IMR-90 (cell line): ENCODE measurements at regions of chr1 and their contacts with region 1.

Region 1: DNA sequence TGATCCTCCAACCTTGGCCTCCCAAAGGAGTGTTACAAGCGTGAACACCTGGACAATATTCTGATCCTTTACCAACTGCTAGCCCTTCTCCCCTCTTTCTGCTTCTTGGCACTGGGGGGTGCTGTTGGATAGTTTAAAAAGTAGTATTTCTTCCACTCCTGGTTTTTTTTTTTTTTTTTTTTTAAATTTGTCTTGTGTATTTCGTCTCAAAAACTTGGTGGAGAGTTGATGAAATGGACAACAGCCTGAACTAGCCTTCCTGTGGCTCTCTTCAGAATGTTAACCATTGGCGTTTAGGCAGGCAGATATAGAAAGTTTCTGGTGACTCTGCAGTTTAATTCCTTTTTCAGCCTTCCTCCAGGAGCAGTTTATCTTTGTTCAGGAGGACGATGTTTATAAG is 69.7 kb upstream of the USP24 start:
- DNase-seq: peak; percentile 60
- ATAC-seq: peak; percentile 84
- H3K4me3 ChIP-seq: no peak overlapping the region
- H3K27ac ChIP-seq: no peak overlapping the region
- H3K4me1 ChIP-seq: peaks cover 3% of the 10 kb centered on the region; the same call in 1 of the 2 replicates
- H3K27me3 ChIP-seq: no peaks in the 10 kb centered on the region
- CTCF ChIP-seq: peak; percentile 78
- POLR2A ChIP-seq: no peak
- RAD21 ChIP-seq: peak; percentile 85

Region 2: DNA sequence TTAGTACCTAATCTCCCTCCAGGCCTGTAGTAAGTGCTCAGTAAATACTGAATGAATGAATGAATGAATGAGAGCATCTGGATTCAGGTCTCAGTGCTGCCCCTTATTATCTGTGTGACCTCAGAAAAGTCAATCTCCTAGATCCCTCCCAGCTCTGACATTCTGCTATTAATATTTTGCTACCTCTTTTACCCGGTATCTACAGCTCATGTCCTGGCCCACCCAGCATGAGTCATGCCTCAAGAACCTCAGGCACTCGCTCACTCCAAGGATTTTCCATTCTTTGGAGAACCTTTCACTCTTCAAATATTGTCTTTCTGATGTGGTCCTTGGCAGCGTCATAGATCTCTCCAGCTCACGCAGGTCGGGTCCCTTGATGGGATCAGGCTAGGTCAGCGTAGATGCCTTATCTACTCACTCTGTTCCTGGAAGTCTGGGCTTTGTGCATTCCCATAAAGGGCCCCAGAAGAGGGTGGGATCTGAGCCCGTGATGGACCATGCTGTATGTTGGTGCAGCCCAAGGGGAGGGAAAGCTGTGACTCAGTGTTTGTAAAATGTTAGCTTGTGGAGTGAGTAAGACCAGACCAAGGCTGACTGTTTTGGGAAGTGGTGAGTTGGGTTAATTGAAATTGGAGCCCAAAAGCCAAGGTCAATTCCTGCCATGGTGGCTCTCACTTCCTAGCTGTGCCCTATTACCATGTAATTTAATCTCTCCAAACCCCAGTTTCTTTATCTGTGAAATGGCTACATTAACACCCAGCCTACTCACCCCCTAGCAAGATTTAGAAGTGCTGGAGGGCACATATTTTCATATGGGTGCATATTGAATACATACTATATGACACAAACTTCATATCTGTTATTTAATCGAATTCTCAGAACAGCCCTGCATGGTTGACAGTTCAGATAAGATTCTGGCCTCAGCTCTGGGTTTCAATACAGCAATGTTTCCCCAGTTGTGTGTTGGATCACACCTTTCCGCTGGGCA is 144.4 kb after region 1 on chr1:
- CTCF ChIA-PET with region 1: no interaction called
- POLR2A ChIA-PET with region 1: no interaction called
- dilution Hi-C with region 1: no loop called
- in situ Hi-C with region 1: no loop called
- intact Hi-C with region 1: loop called (anchors 10 kb)
- DNase-seq: peak; percentile 100
- ATAC-seq: peak; percentile 85
- H3K4me3 ChIP-seq: no peak overlapping the region
- H3K27ac ChIP-seq: peak overlapping the region; percentile 80
- H3K4me1 ChIP-seq: peaks cover 38% of the 10 kb centered on the region
- H3K27me3 ChIP-seq: no peaks in the 10 kb centered on the region
- CTCF ChIP-seq: no peak
- POLR2A ChIP-seq: 0 out of 2 replicates have a peak, but pooled peaks have one; percentile 15
- RAD21 ChIP-seq: peak; percentile 29; the same call in 1 of the 2 replicates

Region 3: DNA sequence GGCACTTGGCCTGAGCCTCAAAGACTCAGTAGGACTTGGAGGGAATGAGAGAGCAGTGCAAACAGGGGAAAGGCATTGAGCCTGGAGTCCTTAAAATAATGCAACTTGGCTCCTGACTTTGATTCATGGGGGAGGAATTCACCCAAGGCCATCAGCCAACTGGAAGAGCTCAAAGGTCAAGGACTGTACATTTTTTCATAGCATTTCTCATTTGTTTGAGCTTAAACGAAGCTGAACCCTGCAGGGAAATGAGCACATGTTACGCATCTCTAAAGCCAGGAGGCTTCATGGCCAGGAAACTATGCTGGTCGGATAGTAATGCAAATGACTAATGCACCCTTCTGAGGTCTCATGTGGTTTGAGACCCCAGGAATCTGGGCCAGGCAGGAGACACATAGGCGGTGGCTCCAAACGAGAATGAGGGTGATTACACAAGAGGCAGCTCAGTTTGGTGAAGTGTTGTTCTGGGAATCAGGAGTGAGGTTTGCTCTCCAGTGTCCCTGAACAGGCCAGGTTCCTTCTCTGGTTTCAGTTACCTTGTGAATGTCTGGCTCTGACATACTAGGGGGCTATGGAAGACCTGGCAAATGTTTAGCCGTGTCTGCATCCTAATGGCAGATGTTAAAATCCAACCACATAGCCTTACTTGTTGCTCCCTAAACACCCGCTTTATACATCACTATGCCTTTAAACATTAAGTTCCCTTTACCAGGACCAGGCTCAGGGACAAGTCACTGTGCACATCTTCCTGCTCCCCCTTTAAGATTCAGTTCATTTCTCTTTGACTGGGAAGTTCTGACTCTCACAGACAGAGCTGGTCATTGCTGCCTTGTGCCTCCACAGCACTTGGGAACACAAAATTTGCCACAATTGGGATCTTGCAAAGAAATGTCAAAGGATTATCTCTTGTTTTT is 434.2 kb after region 1 on chr1:
- CTCF ChIA-PET with region 1: no interaction called
- POLR2A ChIA-PET with region 1: no interaction called
- dilution Hi-C with region 1: no loop called
- in situ Hi-C with region 1: no loop called
- intact Hi-C with region 1: loop called (anchors 2 kb)
- DNase-seq: peak; percentile 100
- ATAC-seq: peak; percentile 75
- H3K4me3 ChIP-seq: no peak overlapping the region
- H3K27ac ChIP-seq: peak overlapping the region; percentile 97
- H3K4me1 ChIP-seq: peaks cover 31% of the 10 kb centered on the region
- H3K27me3 ChIP-seq: no peaks in the 10 kb centered on the region
- CTCF ChIP-seq: no peak
- POLR2A ChIP-seq: peak; percentile 54; the same call in 1 of the 2 replicates
- RAD21 ChIP-seq: peak; percentile 38

Region 4: GRCh38 chr1:56074007-56074651 is 789.3 kb after region 1 on chr1:
- CTCF ChIA-PET with region 1: no interaction called
- POLR2A ChIA-PET with region 1: no interaction called
- dilution Hi-C with region 1: no loop called
- in situ Hi-C with region 1: no loop called
- intact Hi-C with region 1: loop called (anchors 10 kb)
- DNase-seq: peak; percentile 88
- ATAC-seq: peak; percentile 82
- H3K4me3 ChIP-seq: no peak overlapping the region
- H3K27ac ChIP-seq: peak overlapping the region; percentile 54; the same call in 1 of the 2 replicates
- H3K4me1 ChIP-seq: peaks cover 9% of the 10 kb centered on the region
- H3K27me3 ChIP-seq: no peaks in the 10 kb centered on the region
- CTCF ChIP-seq: no peak
- POLR2A ChIP-seq: no peak
- RAD21 ChIP-seq: no peak

Region 5: DNA sequence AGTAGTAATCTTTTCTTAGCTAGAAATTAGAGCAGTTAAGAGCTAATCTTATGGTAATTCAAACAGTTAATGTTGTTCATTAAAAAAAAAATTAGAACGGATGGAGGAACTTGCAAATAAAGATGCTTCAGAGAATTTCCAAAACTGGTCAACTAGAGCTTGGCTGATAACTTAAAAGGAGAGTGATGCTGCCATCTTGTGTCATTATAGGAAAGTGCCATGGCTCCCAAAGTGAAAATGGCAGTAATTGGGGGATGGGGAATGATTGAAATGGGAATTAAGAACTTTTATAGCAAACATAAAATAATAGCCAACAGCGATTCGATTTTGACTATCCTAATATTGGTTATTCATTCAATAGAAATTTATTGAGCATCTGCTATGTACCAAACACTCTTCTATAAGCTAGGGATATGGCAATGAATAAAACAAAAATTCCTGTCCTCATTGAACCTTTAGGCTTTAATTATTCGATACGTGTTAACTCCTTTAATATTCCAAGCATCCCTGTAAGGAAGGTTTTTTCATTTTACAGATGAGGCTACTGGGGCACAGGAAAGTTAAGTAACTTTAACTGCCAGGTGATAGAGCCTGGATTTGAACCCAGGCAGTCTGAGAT is 1300.2 kb after region 1 on chr1:
- CTCF ChIA-PET with region 1: interaction called, 14 read pairs
- POLR2A ChIA-PET with region 1: no interaction called
- dilution Hi-C with region 1: loop called (anchors 25 kb)
- in situ Hi-C with region 1: loop called (anchors 5 kb)
- intact Hi-C with region 1: loop called (anchors 1 kb)
- DNase-seq: peak; percentile 77
- ATAC-seq: peak; percentile 89
- H3K4me3 ChIP-seq: no peak overlapping the region
- H3K27ac ChIP-seq: no peak overlapping the region
- H3K4me1 ChIP-seq: no peaks in the 10 kb centered on the region
- H3K27me3 ChIP-seq: no peaks in the 10 kb centered on the region
- CTCF ChIP-seq: peak; percentile 94
- POLR2A ChIP-seq: no peak
- RAD21 ChIP-seq: peak; percentile 93

Region 6: DNA sequence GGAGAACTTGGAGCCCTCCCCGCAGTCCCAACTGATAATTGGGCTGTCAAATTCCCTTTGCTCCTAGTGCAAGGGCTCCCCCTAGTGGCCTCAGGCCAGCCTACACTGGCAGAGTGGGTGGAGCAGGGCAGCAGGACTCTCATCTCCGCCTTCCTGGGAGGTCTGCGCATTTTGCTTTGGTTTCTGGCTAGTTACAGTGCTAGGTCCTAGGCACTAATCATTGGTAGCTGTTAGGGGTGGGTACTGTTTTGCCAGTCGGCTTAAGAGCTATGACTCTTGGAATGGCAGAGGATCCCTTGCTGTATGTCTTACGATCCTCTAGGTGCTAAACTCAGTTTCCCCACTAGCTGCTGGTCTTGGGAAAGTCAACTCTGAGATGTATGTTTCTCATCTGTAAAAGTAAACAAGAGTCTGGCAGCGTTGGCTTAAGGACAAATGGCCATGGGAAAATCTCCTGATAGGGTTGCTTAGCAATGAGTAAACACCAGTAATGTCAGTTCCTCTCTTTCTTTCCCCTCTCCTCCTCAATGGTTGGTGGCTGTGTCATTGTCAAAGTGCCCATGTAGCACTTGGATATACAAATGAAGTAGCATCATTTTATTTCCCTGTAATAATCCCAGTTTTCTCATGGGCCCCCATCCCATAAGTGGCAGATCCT is 1536.4 kb after region 1 on chr1:
- CTCF ChIA-PET with region 1: interaction called, 3 read pairs
- POLR2A ChIA-PET with region 1: no interaction called
- dilution Hi-C with region 1: no loop called
- in situ Hi-C with region 1: loop called (anchors 5 kb)
- intact Hi-C with region 1: loop called (anchors 2 kb)
- DNase-seq: peak; percentile 79
- ATAC-seq: peak; percentile 93
- H3K4me3 ChIP-seq: no peak overlapping the region
- H3K27ac ChIP-seq: no peak overlapping the region
- H3K4me1 ChIP-seq: peaks cover 13% of the 10 kb centered on the region
- H3K27me3 ChIP-seq: no peaks in the 10 kb centered on the region
- CTCF ChIP-seq: peak; percentile 95
- POLR2A ChIP-seq: no peak
- RAD21 ChIP-seq: peak; percentile 91